ENCODE measurements at regions of chr16 and their contacts with region 1.

Region 1: GRCh38 chr16:58451945-58452401 is 48.0 kb upstream of the NDRG4 start:
- DNase-seq: no peak
- ATAC-seq: peak in 2 of 8 donors; percentile 35 to 62
- H3K4me3 ChIP-seq: no peak overlapping the region
- H3K27ac ChIP-seq: peak overlapping the region in 7 of 10 donors; percentile 42 to 83 (median 71)
- H3K4me1 ChIP-seq: peaks cover 0 to 26% (median 4%) of the 10 kb centered on the region in 9 donors
- H3K27me3 ChIP-seq: no peaks in the 10 kb centered on the region
- CTCF ChIP-seq: no peak

Region 2: DNA sequence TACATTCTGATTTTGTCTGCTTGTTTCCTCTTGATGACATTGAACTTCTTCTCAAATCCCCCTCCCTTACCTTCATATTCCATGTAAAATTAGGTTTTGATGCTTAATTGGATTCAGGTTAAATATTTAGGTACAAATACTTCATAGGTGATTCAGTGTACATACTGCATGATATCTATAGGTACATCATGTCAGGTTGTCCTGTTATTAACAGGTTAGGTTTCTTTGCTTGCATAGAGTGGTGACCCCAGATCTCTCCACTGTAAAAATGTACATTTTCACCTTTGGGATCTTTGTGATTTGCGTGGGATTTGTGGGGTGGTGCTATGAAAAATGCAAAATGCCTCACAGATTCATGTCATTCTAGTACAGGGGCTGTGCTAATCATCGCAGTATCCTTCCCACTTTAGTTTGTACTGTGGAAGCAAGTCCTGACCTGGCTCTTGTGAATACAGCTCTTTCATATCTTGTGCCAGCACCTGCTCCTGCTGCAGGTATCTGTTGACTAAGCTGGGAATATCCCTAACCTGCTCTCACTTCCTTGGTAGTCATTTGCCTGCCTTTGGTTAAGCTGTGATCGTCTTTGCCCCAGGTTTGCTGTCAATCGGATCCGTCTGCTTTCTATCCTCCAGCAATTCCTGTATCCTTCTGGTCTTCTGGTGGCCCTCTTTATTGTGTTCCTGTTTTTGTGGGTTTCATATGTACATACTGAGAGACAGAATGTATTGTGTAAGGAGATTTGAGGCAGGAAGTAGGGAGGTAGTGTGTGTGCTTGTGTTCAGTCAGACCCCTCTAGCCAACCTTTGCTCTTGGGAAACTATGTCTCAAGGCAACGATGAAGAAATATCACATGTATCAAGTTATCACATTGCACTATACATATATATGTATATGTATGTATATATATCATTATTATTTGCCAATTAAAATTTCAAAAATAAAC is 67.6 kb before region 1 on chr16:
- intact Hi-C with region 1: loop called in 1 of 10 experiments (anchors 10 kb)
- DNase-seq: no peak
- ATAC-seq: no peak
- H3K4me3 ChIP-seq: no peak overlapping the region
- H3K27ac ChIP-seq: no peak overlapping the region
- H3K4me1 ChIP-seq: no peaks in the 10 kb centered on the region
- H3K27me3 ChIP-seq: peaks cover 0 to 4% (median 0%) of the 10 kb centered on the region in 7 donors
- CTCF ChIP-seq: no peak

Region 3: GRCh38 chr16:58418601-58419000 is 33.4 kb before region 1 on chr16:
- intact Hi-C with region 1: loop called in 1 of 10 experiments (anchors 2 kb)
- DNase-seq: peak; percentile 64 to 76
- ATAC-seq: peak; percentile 73 to 87 (median 85)
- H3K4me3 ChIP-seq: no peak overlapping the region
- H3K27ac ChIP-seq: peak overlapping the region; percentile 73 to 95 (median 92)
- H3K4me1 ChIP-seq: peaks cover 0 to 59% (median 18%) of the 10 kb centered on the region in 9 donors
- H3K27me3 ChIP-seq: peaks cover 0 to 6% (median 0%) of the 10 kb centered on the region in 7 donors
- CTCF ChIP-seq: no peak

Region 4: GRCh38 chr16:58551496-58551895 is 99.5 kb after region 1 on chr16:
- intact Hi-C with region 1: no loop called
- DNase-seq: peak; percentile 41 to 67
- ATAC-seq: peak; percentile 79 to 98 (median 90)
- H3K4me3 ChIP-seq: no peak overlapping the region
- H3K27ac ChIP-seq: peak overlapping the region in 3 of 10 donors; percentile 11 to 17 (median 13)
- H3K4me1 ChIP-seq: peaks cover 0 to 50% (median 14%) of the 10 kb centered on the region in 9 donors
- H3K27me3 ChIP-seq: no peaks in the 10 kb centered on the region
- CTCF ChIP-seq: no peak